H1 (cell line): ENCODE measurements at regions of chr1 and their contacts with region 1.

Region 1: GRCh38 chr1:168439456-168440375 is 104.1 kb downstream of the XCL2 start:
- DNase-seq: peak; percentile 61 to 82
- H3K4me3 ChIP-seq: 0 out of 8 replicates have a peak overlapping the region, but pooled peaks of 1 of the 4 experiments have one; percentile 13
- H3K27ac ChIP-seq: no peak overlapping the region
- H3K4me1 ChIP-seq: 0 out of 7 replicates have a peak, but pooled peaks cover 0 to 2% (median 0%) of the 10 kb centered on the region in 4 experiments
- H3K27me3 ChIP-seq: no peaks in the 10 kb centered on the region
- CTCF ChIP-seq: peak; percentile 58 to 94 (median 87)
- EP300 ChIP-seq: no peak
- POLR2A ChIP-seq: no peak
- RAD21 ChIP-seq: peak; percentile 96 to 98

Region 2: DNA sequence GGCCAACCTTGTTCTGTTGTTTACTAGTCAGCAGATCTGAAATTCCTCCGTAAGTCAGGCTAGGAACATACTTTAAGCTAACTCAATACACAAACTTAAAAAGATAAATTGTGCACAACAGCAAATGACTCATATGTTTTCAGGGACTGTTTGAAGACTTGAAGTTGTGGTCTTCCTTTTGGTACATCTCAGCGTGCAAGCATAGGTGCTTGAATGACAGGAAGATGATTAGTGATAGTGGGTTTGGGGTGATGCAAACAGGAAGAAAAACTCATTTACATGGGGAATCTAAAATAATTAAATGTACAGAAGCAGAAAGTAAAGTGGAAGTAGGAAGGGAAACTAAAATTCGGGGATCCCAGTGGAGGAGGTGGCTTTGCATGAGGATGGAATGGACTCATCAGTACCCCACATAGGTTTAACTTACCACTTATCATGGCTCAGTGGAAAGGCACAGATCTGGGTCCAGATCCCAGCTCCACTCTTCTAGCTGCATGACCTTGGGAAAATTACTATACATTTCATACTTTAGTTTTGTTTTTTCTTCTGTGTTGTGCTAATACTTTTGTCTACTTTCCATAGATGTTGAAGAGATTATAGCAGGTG is 18.2 kb before region 1 on chr1:
- CTCF ChIA-PET with region 1: interaction called, 43 read pairs
- POLR2A ChIA-PET with region 1: no interaction called
- DNase-seq: no peak
- H3K4me3 ChIP-seq: no peak overlapping the region
- H3K27ac ChIP-seq: no peak overlapping the region
- H3K4me1 ChIP-seq: no peaks in the 10 kb centered on the region
- H3K27me3 ChIP-seq: no peaks in the 10 kb centered on the region
- CTCF ChIP-seq: no peak
- EP300 ChIP-seq: no peak
- POLR2A ChIP-seq: no peak
- RAD21 ChIP-seq: no peak

Region 3: GRCh38 chr1:168428063-168428731 is 11.5 kb before region 1 on chr1:
- CTCF ChIA-PET with region 1: interaction called, 43 read pairs
- POLR2A ChIA-PET with region 1: no interaction called
- DNase-seq: no peak
- H3K4me3 ChIP-seq: no peak overlapping the region
- H3K27ac ChIP-seq: no peak overlapping the region
- H3K4me1 ChIP-seq: peaks cover 0 to 6% (median 3%) of the 10 kb centered on the region in 4 experiments; a peak in 4 of 7 replicates
- H3K27me3 ChIP-seq: no peaks in the 10 kb centered on the region; a peak in 1 of 7 replicates
- CTCF ChIP-seq: no peak
- EP300 ChIP-seq: no peak
- POLR2A ChIP-seq: no peak
- RAD21 ChIP-seq: no peak

Region 4: DNA sequence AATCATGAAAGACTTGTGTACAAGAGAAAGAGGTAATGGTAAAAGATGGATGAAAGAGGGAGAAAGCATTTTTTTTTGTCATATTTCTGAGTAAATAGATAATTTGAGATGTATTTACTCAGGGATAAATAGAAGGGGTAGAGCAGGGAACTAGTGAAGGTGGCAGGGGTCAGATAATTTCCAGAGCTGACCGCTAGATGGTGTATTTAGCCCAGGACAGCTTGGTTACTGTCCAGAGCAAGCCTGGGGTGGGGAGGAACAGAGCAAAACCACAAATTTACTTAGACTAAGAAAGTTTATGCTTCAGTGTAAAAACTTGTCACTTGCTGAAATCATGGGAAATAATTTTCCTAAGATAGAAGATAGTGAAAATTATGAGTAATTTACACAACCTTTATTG is 12.6 kb after region 1 on chr1:
- CTCF ChIA-PET with region 1: interaction called, 66 read pairs
- POLR2A ChIA-PET with region 1: no interaction called
- DNase-seq: peak in 1 of 2 experiments; percentile 54
- H3K4me3 ChIP-seq: no peak overlapping the region
- H3K27ac ChIP-seq: no peak overlapping the region
- H3K4me1 ChIP-seq: no peaks in the 10 kb centered on the region
- H3K27me3 ChIP-seq: no peaks in the 10 kb centered on the region
- CTCF ChIP-seq: peak; percentile 49 to 66 (median 59)
- EP300 ChIP-seq: no peak
- POLR2A ChIP-seq: no peak
- RAD21 ChIP-seq: peak; percentile 72 to 74

Region 5: DNA sequence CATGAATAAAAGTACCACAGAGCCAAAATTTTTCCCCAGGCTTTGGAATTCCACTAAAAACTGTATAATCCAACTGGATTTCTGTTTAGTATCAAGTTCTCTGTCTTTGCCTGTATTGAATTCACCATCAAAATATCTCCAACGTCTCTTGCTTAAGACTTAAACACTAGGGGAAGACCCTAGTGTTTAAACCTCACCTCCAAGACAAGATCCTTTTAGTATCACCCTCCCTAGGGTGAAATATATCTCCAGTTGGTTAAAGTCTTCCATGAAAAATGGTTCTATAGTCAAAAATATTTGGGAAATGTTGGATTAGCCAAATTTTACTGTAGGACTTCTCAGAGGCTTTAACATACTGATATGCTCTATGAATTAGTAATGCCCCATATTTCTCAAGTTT is 128.6 kb after region 1 on chr1:
- CTCF ChIA-PET with region 1: interaction called, 13 read pairs
- POLR2A ChIA-PET with region 1: no interaction called
- DNase-seq: no peak
- H3K4me3 ChIP-seq: no peak overlapping the region
- H3K27ac ChIP-seq: no peak overlapping the region
- H3K4me1 ChIP-seq: peaks cover 0 to 2% (median 0%) of the 10 kb centered on the region in 4 experiments; a peak in 1 of 7 replicates
- H3K27me3 ChIP-seq: no peaks in the 10 kb centered on the region
- CTCF ChIP-seq: no peak
- EP300 ChIP-seq: no peak
- POLR2A ChIP-seq: no peak
- RAD21 ChIP-seq: no peak

Region 6: DNA sequence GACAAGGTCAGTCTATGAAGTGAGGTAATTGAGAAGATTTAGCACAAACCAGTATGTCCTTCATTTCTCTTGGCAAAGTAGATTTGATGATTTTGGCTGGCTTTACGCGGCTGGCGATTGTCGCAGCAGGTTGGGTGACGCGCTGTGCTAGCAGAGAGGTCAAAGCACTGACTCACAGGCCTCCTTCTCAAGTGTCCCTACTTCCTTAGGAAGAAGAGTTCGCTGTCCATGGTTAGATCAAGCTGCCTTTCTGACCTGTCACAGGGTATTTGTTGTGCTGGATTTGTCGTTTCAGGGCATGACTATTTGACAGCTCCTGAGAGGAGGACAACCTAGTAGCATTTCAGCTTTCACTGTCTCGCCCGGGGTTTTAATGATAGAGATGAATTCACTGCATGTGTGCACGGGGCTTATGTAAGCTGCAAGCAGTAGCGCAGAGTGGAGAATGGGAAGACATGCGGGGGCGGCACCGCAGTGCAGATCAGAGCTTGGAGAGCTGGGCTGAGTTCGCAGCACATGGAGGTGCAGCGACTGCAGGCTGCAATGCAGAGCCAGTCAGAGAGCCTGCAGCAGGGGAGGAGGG is 169.5 kb after region 1 on chr1:
- CTCF ChIA-PET with region 1: interaction called, 13 read pairs
- POLR2A ChIA-PET with region 1: no interaction called
- DNase-seq: peak in 1 of 2 experiments; percentile 52
- H3K4me3 ChIP-seq: no peak overlapping the region
- H3K27ac ChIP-seq: no peak overlapping the region
- H3K4me1 ChIP-seq: no peaks in the 10 kb centered on the region; a peak in 1 of 7 replicates
- H3K27me3 ChIP-seq: peaks cover 0 to 1% (median 0%) of the 10 kb centered on the region in 4 experiments; a peak in 1 of 7 replicates
- CTCF ChIP-seq: no peak
- EP300 ChIP-seq: no peak
- POLR2A ChIP-seq: no peak
- RAD21 ChIP-seq: no peak